ENCODE measurements at regions of chr12 and their contacts with region 1.

Region 1: GRCh38 chr12:48247181-48247966 is 44.3 kb upstream of the OR10AD1 start:
- DNase-seq: no peak
- H3K4me3 ChIP-seq: no peak overlapping the region
- H3K4me3 Mint-ChIP-seq: no peak overlapping the region
- H3K27ac ChIP-seq: no peak overlapping the region
- H3K27ac Mint-ChIP-seq: no peak overlapping the region
- H3K4me1 ChIP-seq: no peaks in the 10 kb centered on the region
- H3K4me1 Mint-ChIP-seq: no peaks in the 10 kb centered on the region
- H3K27me3 ChIP-seq: no peaks in the 10 kb centered on the region
- H3K27me3 Mint-ChIP-seq: peaks cover 13 to 15% of the 10 kb centered on the region in 2 donors

Region 2: GRCh38 chr12:48454667-48455066 is 207.3 kb after region 1 on chr12:
- CTCF ChIA-PET with region 1: no interaction called
- POLR2A ChIA-PET with region 1: no interaction called
- intact Hi-C with region 1: loop called (anchors 1 kb)
- DNase-seq: peak in 4 of 5 donors; percentile 18 to 39 (median 33)
- H3K4me3 ChIP-seq: no peak overlapping the region
- H3K4me3 Mint-ChIP-seq: no peak overlapping the region
- H3K27ac ChIP-seq: no peak overlapping the region
- H3K27ac Mint-ChIP-seq: no peak overlapping the region
- H3K4me1 ChIP-seq: no peaks in the 10 kb centered on the region
- H3K4me1 Mint-ChIP-seq: no peaks in the 10 kb centered on the region
- H3K27me3 ChIP-seq: no peaks in the 10 kb centered on the region
- H3K27me3 Mint-ChIP-seq: peaks cover 20% of the 10 kb centered on the region in 2 donors

Measured in CD4-positive, alpha-beta memory T cell (primary cell).